ENCODE measurements at regions of chr2 and their contacts with region 1.

Region 1: GRCh38 chr2:173286153-173286809 is 68.4 kb upstream of the CDCA7 start:
- DNase-seq: peak; percentile 30
- H3K4me3 Mint-ChIP-seq: no peak overlapping the region
- H3K27ac Mint-ChIP-seq: peak overlapping the region; percentile 50
- H3K4me1 Mint-ChIP-seq: peaks cover 23% of the 10 kb centered on the region
- H3K27me3 Mint-ChIP-seq: no peaks in the 10 kb centered on the region

Region 2: DNA sequence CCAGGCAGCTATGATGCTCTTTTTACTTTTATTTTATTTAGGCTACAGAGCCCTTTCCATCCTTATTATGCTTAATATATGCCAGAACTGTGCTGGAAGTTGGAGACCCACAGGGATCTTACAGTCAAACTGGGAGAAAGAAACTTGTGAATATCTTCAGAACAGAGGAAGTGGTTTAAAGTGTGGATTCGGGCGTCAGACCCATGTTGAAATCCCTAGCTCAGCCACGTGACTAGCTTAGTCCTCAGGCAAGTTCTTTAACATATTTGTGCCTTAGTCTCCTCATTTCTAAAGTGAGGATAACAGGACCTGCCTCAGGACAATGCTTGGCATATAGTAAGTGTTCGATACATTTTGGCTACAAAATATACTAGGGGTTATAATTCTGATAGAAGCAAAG is 151.6 kb before region 1 on chr2:
- CTCF ChIA-PET with region 1: interaction called, 3 read pairs
- POLR2A ChIA-PET with region 1: no interaction called
- intact Hi-C with region 1: loop called (anchors 1 kb)
- DNase-seq: peak; percentile 20
- H3K4me3 Mint-ChIP-seq: no peak overlapping the region
- H3K27ac Mint-ChIP-seq: no peak overlapping the region
- H3K4me1 Mint-ChIP-seq: peaks cover 41% of the 10 kb centered on the region
- H3K27me3 Mint-ChIP-seq: peaks cover 46% of the 10 kb centered on the region

Region 3: GRCh38 chr2:173239644-173240043 is 46.6 kb before region 1 on chr2:
- CTCF ChIA-PET with region 1: no interaction called
- POLR2A ChIA-PET with region 1: interaction called, 3 read pairs
- intact Hi-C with region 1: loop called (anchors 2 kb)
- DNase-seq: peak; percentile 57
- H3K4me3 Mint-ChIP-seq: no peak overlapping the region
- H3K27ac Mint-ChIP-seq: no peak overlapping the region
- H3K4me1 Mint-ChIP-seq: peaks cover 5% of the 10 kb centered on the region
- H3K27me3 Mint-ChIP-seq: peaks cover 9% of the 10 kb centered on the region

Region 4: GRCh38 chr2:173354601-173355131 is 68.4 kb after region 1 on chr2 and contains the start of gene CDCA7:
- CTCF ChIA-PET with region 1: interaction called, 3 read pairs
- POLR2A ChIA-PET with region 1: interaction called, 3 read pairs
- intact Hi-C with region 1: loop called (anchors 1 kb)
- DNase-seq: peak; percentile 78
- H3K4me3 Mint-ChIP-seq: peak within 1 kb of the TSS; percentile 84
- H3K27ac Mint-ChIP-seq: peak within 1 kb of the TSS; percentile 93
- H3K4me1 Mint-ChIP-seq: peaks cover 41% of the 10 kb centered on the region
- H3K27me3 Mint-ChIP-seq: peaks cover 47% of the 10 kb centered on the region
- total RNA-seq, gene CDCA7: 59.9 to 64.1 TPM

Region 5: DNA sequence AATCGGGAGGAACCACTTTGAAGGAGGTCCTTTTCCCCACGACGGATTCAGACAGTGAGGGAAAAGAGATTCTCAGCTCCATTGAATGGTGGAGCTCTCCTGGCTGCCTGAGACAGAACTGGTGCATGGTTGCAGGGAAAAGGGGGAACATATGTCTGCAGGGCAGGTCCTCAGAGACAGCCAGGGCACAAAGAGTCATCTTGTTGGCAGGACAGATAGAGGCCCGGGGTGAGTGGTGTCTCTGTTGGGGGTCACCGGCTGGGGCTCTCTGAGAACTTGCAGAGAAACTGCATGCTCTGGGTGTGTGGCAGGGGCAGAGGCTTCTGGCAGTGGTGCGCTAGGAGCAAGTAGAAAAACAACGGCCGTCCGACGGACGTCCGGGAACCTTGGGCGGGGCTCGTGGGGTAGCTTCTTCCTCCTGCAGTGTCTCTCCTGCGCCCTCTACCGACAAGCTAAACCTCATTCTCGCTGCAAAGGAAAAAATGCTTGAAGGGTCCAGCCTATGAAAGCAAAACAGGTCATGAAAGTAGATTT is 162.7 kb after region 1 on chr2:
- CTCF ChIA-PET with region 1: no interaction called
- POLR2A ChIA-PET with region 1: no interaction called
- intact Hi-C with region 1: loop called (anchors 10 kb)
- DNase-seq: peak; percentile 82
- H3K4me3 Mint-ChIP-seq: peak overlapping the region; percentile 57
- H3K27ac Mint-ChIP-seq: no peak overlapping the region
- H3K4me1 Mint-ChIP-seq: peaks cover 16% of the 10 kb centered on the region
- H3K27me3 Mint-ChIP-seq: peaks cover 8% of the 10 kb centered on the region

Region 6: DNA sequence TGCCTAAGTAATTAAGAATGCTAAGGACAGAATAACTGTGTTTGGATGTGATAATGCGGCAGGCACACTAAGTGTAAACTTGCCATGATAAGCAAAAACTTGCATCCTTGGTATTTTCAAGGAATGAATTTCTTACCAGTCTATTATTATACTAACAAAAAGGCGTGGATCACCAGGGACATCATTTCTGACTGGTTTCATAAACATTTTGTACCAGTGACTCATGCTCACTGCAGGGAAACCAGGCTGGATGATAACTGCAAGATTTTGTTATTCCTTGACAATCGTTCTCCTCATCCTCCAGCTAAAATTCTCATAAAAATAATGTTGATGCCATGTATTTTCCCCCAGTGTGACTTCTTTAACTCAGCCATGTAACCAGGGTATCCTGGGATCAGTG is 357.9 kb after region 1 on chr2:
- CTCF ChIA-PET with region 1: no interaction called
- POLR2A ChIA-PET with region 1: no interaction called
- intact Hi-C with region 1: no loop called
- DNase-seq: no peak
- H3K4me3 Mint-ChIP-seq: no peak overlapping the region
- H3K27ac Mint-ChIP-seq: no peak overlapping the region
- H3K4me1 Mint-ChIP-seq: no peaks in the 10 kb centered on the region
- H3K27me3 Mint-ChIP-seq: peaks cover 5% of the 10 kb centered on the region